ENCODE measurements at regions of chr9 and their contacts with region 1.

Region 1: DNA sequence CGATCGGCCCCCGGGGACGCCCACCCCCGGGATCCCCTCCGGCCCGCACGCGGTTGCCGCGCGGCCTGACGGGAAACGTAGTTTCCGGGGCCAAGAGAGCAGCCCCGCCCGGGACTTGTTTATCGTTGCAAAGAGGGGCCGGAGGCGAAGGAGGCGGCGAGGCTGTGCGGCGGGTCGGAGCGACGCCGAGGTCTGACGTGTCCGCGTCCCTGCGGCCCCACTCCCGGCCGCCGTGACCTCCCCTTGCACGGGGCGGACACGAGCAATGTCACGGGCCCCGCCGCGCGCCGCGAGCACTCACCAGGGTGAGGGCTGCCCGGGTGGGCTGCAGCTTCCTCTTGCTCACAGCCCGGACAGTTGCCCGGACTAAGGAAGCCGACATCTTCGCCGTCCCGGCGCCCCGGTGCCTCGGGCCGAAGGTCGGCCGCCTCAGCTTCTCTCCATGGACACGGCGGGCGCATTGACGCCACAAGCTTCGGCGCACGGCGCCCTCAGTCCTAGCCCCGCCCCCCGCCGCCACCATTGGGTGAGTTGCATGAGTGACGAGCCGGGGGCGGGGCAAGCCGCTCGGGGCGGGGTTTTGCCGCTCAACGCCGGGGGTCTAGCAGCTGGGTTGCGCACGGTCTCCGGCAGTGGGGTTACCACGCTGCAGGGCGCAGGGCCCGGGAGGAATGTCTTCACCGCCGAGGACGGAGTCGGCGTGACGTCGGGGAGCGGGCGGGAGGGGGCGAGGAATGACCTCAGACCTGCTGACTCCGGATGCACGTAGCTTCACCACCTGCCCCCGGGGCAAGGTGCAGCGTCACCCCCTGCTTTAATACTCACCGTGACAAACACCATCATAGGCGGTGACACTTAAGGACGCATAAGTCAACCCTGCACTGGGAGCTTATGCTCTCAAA is at the start of gene ISCA1:
- DNase-seq: peak; percentile 97 to 100 (median 97)
- H3K4me3 ChIP-seq: peak within 1 kb of the TSS; percentile 93 to 94
- H3K4me3 Mint-ChIP-seq: peak within 1 kb of the TSS; percentile 87 to 98 (median 96)
- H3K27ac ChIP-seq: peak within 1 kb of the TSS; percentile 96
- H3K27ac Mint-ChIP-seq: peak within 1 kb of the TSS; percentile 91 to 100 (median 99)
- H3K4me1 ChIP-seq: peaks cover 45% of the 10 kb centered on the region
- H3K4me1 Mint-ChIP-seq: peaks cover 31 to 48% (median 39%) of the 10 kb centered on the region in 4 donors
- H3K27me3 ChIP-seq: no peaks in the 10 kb centered on the region
- H3K27me3 Mint-ChIP-seq: no peaks in the 10 kb centered on the region
- total RNA-seq, gene ISCA1: 34.6 to 37.2 TPM

Region 2: DNA sequence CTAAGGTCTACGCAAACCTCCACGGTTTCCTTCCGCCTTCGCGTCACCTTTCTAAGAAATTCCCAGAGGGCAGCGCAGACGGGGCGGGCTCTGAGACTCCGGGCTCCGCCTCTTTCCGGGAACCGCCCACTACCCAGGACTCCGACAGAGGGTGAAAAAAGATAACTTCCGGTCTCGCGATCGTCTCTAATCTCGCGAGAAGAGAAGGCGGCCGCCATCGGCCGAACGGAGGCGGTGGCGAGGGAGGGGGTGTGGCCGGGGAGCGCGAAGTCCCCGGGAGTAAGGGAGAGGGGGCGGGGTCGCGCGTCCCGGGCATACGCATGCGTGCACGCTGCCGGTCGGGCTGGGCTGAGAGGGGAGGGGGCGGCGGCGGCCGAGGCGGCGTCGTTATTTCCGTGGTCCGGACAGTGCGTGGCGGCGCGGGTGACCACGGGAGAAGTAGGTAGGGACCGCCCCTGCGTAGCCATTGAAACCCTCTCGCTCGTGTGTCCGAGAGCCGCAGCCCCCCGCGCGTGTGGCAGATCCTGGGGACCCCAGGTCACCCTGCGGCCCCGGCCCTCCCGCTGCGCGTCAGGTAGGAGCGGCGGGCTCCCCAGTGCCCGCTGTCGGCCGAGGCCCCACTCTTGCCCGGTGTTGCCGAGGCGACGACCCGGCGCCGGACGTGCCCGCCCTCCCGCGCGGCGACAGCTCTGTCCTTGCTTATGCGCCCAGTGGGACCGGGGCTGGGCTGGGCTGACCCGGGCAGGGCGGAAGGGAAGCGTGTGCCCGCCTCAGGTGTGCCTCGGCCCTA is 341.3 kb before region 1 on chr9 and contains the start of gene NAA35:
- CTCF ChIA-PET with region 1: no interaction called
- POLR2A ChIA-PET with region 1: interaction called, 15 read pairs
- intact Hi-C with region 1: loop called (anchors 1 kb)
- DNase-seq: peak; percentile 99
- H3K4me3 ChIP-seq: peak within 1 kb of the TSS; percentile 43 to 73
- H3K4me3 Mint-ChIP-seq: peak within 1 kb of the TSS; percentile 85 to 95 (median 89)
- H3K27ac ChIP-seq: peak within 1 kb of the TSS; percentile 87
- H3K27ac Mint-ChIP-seq: peak within 1 kb of the TSS in 6 of 7 donors; percentile 91 to 99 (median 96)
- H3K4me1 ChIP-seq: peaks cover 45% of the 10 kb centered on the region
- H3K4me1 Mint-ChIP-seq: peaks cover 12 to 19% (median 16%) of the 10 kb centered on the region in 4 donors
- H3K27me3 ChIP-seq: no peaks in the 10 kb centered on the region
- H3K27me3 Mint-ChIP-seq: no peaks in the 10 kb centered on the region
- total RNA-seq, gene NAA35: 24.8 to 27.8 TPM

Region 3: DNA sequence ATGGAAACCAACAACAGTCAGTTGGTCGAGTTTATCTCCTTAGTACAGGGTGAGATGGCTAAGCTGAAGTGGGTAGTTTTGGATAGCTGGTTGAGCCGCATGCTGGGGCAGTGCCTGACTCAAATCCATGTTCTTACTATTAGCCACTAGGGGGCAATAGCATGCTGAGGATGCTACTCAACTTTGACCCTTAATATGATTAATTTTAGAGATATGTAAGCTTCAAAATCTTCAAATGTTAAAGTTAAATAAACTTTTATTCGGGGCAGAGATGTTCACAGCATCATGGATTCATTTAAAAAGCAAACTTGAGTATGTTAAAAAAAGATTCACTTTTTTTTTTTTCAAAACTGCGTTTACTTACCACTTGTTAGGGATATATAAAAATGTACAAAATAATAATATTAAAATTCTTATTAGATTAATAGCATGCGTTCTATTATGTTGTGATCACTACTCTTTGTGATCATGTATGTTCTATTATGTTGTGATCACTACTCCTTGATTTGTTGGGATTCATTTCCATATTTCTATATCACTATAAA is 79.9 kb before region 1 on chr9:
- CTCF ChIA-PET with region 1: no interaction called
- POLR2A ChIA-PET with region 1: no interaction called
- intact Hi-C with region 1: no loop called
- DNase-seq: peak in 4 of 5 donors; percentile 14 to 33 (median 24)
- H3K4me3 ChIP-seq: no peak overlapping the region
- H3K4me3 Mint-ChIP-seq: no peak overlapping the region
- H3K27ac ChIP-seq: no peak overlapping the region
- H3K27ac Mint-ChIP-seq: peak overlapping the region in 1 of 7 donors; percentile 17
- H3K4me1 ChIP-seq: no peaks in the 10 kb centered on the region
- H3K4me1 Mint-ChIP-seq: peaks cover 0 to 5% (median under 1%) of the 10 kb centered on the region in 4 donors
- H3K27me3 ChIP-seq: no peaks in the 10 kb centered on the region
- H3K27me3 Mint-ChIP-seq: peaks cover 0 to 4% of the 10 kb centered on the region in 2 donors

Region 4: DNA sequence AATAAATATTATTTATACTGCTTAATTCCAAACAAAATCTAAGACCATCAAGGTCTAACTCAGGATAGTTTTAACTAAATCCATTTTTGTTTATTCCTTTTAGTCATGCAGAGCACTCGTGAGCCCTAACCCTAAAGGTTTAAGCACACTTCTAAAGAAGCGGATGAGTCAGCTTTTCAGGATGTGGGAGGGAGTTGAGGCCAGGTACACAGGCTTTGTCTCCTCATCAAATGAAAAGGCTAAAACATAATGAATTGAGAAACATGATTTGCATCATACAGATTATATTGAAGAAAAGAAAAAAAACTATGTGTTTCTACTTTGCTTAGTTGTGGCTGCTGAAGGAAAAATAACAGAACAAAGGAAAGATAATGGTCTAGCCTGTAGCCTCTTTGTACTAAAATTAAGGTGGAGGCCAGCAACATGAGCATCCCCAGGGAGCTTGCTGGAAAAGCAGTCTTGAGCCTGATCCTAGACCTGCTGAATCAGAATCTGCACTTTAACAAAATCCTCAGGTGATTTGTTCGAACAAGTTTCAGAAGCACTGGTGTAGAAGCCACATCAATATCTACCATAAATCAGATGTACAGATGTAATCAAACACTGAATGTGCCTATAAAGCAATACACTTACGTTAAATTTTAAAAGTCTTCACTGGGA is 21.1 kb after region 1 on chr9:
- CTCF ChIA-PET with region 1: no interaction called
- POLR2A ChIA-PET with region 1: interaction called, 15 read pairs
- intact Hi-C with region 1: loop called (anchors 1 kb)
- DNase-seq: peak; percentile 33 to 78 (median 46)
- H3K4me3 ChIP-seq: no peak overlapping the region
- H3K4me3 Mint-ChIP-seq: peak overlapping the region in 5 of 8 donors; percentile 1 to 14 (median 3)
- H3K27ac ChIP-seq: no peak overlapping the region
- H3K27ac Mint-ChIP-seq: peak overlapping the region; percentile 19 to 94 (median 85)
- H3K4me1 ChIP-seq: peaks cover 16% of the 10 kb centered on the region
- H3K4me1 Mint-ChIP-seq: peaks cover 21 to 34% (median 27%) of the 10 kb centered on the region in 4 donors
- H3K27me3 ChIP-seq: no peaks in the 10 kb centered on the region
- H3K27me3 Mint-ChIP-seq: no peaks in the 10 kb centered on the region

Region 5: GRCh38 chr9:86341006-86341491 is 58.7 kb after region 1 on chr9:
- CTCF ChIA-PET with region 1: no interaction called
- POLR2A ChIA-PET with region 1: interaction called, 10 read pairs
- intact Hi-C with region 1: no loop called
- DNase-seq: no peak
- H3K4me3 ChIP-seq: no peak overlapping the region
- H3K4me3 Mint-ChIP-seq: no peak overlapping the region
- H3K27ac ChIP-seq: no peak overlapping the region
- H3K27ac Mint-ChIP-seq: peak overlapping the region; percentile 43 to 90 (median 56)
- H3K4me1 ChIP-seq: peaks cover 43% of the 10 kb centered on the region
- H3K4me1 Mint-ChIP-seq: peaks cover 27 to 66% (median 45%) of the 10 kb centered on the region in 4 donors
- H3K27me3 ChIP-seq: no peaks in the 10 kb centered on the region
- H3K27me3 Mint-ChIP-seq: no peaks in the 10 kb centered on the region

Region 6: GRCh38 chr9:86354011-86354817 is 71.9 kb after region 1 on chr9 and contains the start of gene TUT7:
- CTCF ChIA-PET with region 1: interaction called, 4 read pairs
- POLR2A ChIA-PET with region 1: interaction called, 32 read pairs
- intact Hi-C with region 1: loop called (anchors 1 kb)
- DNase-seq: peak; percentile 92 to 96 (median 93)
- H3K4me3 ChIP-seq: peak within 1 kb of the TSS; percentile 69 to 75
- H3K4me3 Mint-ChIP-seq: peak within 1 kb of the TSS; percentile 91 to 98 (median 97)
- H3K27ac ChIP-seq: peak within 1 kb of the TSS; percentile 84
- H3K27ac Mint-ChIP-seq: peak within 1 kb of the TSS; percentile 85 to 99 (median 97)
- H3K4me1 ChIP-seq: peaks cover 46% of the 10 kb centered on the region
- H3K4me1 Mint-ChIP-seq: peaks cover 23 to 60% (median 43%) of the 10 kb centered on the region in 4 donors
- H3K27me3 ChIP-seq: no peaks in the 10 kb centered on the region
- H3K27me3 Mint-ChIP-seq: no peaks in the 10 kb centered on the region
- total RNA-seq, gene TUT7: 60.2 to 64.1 TPM

Measured in CD4-positive, alpha-beta memory T cell (primary cell).